ENCODE measurements at regions of chr2 and their contacts with region 1.

Region 1: GRCh38 chr2:65064728-65065552 is 8.7 kb downstream of the CEP68 start:
- DNase-seq: peak; percentile 79
- H3K4me3 ChIP-seq: no peak overlapping the region
- H3K27ac ChIP-seq: peak overlapping the region; percentile 77
- H3K27me3 ChIP-seq: no peaks in the 10 kb centered on the region
- CTCF ChIP-seq: peak; percentile 62

Region 2: DNA sequence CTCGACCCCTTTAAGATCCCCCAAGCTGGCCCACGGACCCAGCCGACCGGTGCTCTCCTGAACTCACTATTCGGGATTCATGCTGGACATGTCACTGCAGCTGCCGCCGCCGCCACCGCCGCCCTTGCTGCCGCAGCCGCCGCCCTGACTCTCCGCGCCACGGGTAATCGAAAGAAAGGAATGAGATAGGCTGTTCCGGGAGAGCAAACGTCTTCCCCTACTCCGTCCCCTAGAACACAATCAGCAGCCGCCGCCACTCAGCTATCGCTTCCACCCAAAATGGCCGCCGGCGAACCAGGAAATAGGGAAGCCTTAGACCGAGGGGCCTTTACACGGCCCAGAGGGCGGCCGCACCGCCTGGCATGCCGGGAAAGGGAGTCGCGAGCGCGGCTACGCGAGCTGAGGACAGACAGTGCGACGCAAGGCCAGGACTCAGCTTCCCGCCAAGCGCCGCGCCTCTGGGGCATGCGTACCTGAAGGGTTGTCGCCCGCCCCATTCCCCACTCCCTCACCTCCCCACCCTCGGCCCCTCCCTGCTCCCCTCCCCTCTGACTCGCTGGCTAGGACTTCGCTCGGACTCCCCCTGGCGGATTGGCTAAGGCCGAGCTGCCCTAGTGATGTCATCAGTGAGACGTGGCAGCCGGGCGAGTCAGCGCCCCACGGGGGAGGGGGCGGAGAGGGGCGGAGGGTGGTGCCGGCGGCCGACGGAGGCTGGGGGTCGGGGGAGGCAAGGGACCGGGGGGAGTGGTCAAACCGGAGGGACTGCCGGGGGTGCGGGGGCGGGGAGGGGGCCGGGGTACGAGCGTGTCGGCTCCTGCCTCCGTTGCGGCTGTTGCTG is 65.1 kb after region 1 on chr2 and contains the start of gene RAB1A:
- CTCF ChIA-PET with region 1: no interaction called
- POLR2A ChIA-PET with region 1: interaction called, 10 read pairs
- DNase-seq: peak; percentile 99
- H3K4me3 ChIP-seq: peak within 1 kb of the TSS; percentile 93
- H3K27ac ChIP-seq: peak within 1 kb of the TSS; percentile 90
- H3K27me3 ChIP-seq: no peaks in the 10 kb centered on the region
- CTCF ChIP-seq: peak; percentile 25; the same call in 1 of the 2 replicates
- polyA plus RNA-seq, gene RAB1A: 215 and 292 TPM in 2 replicates

Region 3: DNA sequence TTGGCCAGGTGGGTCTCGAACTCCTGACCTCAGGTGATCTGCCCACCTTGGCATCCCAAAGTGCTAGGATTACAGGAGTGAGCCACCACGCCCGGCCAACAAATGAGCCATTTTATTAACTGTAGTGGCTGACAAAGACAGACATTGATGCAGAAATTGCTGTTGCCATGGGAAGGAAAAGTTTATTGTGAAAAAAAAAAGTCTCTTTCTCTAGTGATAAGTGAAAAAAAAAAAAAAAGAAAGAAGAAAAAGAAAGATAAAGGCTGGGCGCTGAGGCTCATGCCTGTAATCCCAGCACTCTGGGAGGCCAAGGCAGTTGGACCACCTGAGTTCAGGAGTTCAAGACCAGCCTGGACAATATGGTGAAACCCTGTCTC is 104.8 kb after region 1 on chr2:
- CTCF ChIA-PET with region 1: interaction called, 12 read pairs
- POLR2A ChIA-PET with region 1: no interaction called
- DNase-seq: no peak
- H3K4me3 ChIP-seq: no peak overlapping the region
- H3K27ac ChIP-seq: no peak overlapping the region
- H3K27me3 ChIP-seq: no peaks in the 10 kb centered on the region
- CTCF ChIP-seq: no peak